Activated T-helper 1 cell treated with anti-CD3 and anti-CD28 coated beads, Interleukin-12 subunit alpha, Interleukin-12 subunit beta, Interleukin-2, Interleukin-4 antibody, amounts not matched to agents 30 ng/mL and 10 ng/mL and 1 ng/mL, durations not matched to agents 14 hours and 24 hours and 36 hours (primary cell): ENCODE measurements at regions of chr11 and their contacts with region 1.

Region 1: GRCh38 chr11:47259178-47259977 is 1.6 kb downstream of the NR1H3 start:
- DNase-seq: no peak
- H3K4me3 Mint-ChIP-seq: no peak overlapping the region
- H3K27ac Mint-ChIP-seq: no peak overlapping the region
- H3K4me1 Mint-ChIP-seq: peaks cover 20% of the 10 kb centered on the region
- H3K27me3 Mint-ChIP-seq: no peaks in the 10 kb centered on the region

Region 2: DNA sequence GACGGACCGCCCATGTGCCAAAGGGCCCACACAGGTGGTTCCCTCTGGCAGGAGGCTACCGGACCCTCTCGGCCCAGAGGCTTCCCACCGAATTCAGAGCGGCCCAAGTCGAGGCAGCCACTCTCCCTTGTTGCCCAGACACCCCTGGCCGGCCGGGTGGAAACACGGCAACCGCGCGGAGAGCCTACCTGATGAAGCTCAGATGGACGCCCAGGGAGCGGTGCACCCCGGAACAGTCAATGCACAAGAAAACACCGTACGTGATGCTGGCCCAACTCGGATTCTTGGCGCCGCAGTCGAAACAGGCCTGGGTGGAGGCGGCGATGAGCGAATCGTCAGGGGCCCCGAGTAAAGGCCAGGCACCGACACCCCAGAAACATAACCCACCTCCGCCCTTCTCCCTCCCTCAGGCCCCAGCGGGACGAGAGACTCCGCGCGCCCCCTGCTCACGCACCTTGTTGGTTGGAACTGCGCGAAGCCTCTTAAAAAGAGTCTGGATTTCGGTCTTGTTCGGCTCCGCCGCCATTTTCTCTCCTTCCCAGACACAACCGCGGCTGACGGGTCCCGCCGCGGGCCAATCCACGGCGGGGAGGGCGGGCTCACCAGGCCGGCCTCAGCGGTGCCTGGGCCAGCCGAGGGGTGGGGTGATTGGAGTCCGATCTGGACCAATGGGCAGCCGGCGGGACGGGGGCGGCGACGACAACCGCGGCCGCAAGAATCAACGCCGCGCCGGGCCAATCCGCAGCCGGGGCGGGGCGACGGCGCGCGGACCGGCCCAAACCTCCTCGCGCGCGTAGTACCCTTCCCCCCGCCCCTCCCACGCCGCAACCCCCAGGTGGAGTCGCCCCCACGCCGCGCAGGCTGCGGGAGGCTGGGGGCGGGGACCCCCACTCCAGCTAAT is 82.8 kb before region 1 on chr11 and contains the start of gene ARFGAP2:
- intact Hi-C with region 1: loop called (anchors 1 kb)
- DNase-seq: peak; percentile 96
- H3K4me3 Mint-ChIP-seq: peak within 1 kb of the TSS; percentile 97
- H3K27ac Mint-ChIP-seq: peak within 1 kb of the TSS; percentile 100
- H3K4me1 Mint-ChIP-seq: peaks cover 36% of the 10 kb centered on the region
- H3K27me3 Mint-ChIP-seq: no peaks in the 10 kb centered on the region
- total RNA-seq, gene ARFGAP2: 111 and 116 TPM in 2 replicates

Region 3: DNA sequence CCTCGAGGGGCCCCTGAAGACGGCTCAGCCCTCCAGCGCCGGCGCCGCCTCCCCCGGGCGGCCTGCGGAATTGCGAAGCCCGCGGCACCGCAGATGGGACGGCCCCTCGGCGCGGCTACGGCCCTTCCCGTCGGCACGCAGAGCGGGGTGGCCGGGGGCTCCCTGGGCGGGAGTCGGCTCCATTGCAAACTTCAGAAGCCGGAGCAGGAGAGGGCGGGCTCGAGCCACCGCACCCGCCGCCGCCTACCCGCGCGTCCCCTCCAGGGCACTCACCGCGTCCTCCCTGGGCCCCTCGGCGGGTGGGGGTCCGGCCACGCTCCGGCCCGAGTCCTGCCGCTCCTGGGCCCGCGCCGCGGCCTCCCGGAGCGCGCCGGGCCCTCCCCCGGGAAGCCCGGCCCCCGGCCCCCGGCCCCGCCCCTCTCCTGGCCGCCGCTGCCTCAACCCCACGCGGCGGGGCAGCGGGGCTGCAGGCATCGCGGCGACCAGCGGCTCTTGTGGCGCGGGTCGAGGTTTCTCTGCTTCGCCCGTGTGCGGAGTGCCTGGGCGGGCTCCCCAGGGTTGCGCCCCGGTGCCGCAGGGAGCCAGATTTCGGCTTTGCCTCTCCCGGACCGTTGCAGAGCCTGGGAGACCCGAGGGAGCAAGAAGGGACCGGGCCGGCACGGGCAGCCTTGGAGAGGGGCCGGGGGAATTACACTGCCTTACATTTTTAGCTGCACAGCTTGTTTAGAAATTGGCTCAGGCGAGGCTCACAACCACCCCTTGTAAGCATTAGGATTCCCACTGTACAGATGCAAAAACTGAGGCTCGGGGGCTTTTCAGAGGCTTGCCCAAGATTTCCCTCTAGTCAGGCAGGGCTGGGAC is 73.1 kb before region 1 on chr11 and contains the start of gene PACSIN3:
- intact Hi-C with region 1: loop called (anchors 2 kb)
- DNase-seq: peak; percentile 29
- H3K4me3 Mint-ChIP-seq: peak within 1 kb of the TSS; percentile 79
- H3K27ac Mint-ChIP-seq: no peak within 1 kb of the TSS
- H3K4me1 Mint-ChIP-seq: no peaks in the 10 kb centered on the region
- H3K27me3 Mint-ChIP-seq: peaks cover 44% of the 10 kb centered on the region
- total RNA-seq, gene PACSIN3: 14.5 and 17.0 TPM in 2 replicates

Region 4: GRCh38 chr11:47524291-47524874 is 265.0 kb after region 1 on chr11:
- intact Hi-C with region 1: no loop called
- DNase-seq: peak; percentile 22
- H3K4me3 Mint-ChIP-seq: peak overlapping the region; percentile 54
- H3K27ac Mint-ChIP-seq: peak overlapping the region; percentile 89
- H3K4me1 Mint-ChIP-seq: peaks cover 45% of the 10 kb centered on the region
- H3K27me3 Mint-ChIP-seq: no peaks in the 10 kb centered on the region